GM12878 (cell line): ENCODE measurements at regions of chr3 and their contacts with region 1.

Region 1: DNA sequence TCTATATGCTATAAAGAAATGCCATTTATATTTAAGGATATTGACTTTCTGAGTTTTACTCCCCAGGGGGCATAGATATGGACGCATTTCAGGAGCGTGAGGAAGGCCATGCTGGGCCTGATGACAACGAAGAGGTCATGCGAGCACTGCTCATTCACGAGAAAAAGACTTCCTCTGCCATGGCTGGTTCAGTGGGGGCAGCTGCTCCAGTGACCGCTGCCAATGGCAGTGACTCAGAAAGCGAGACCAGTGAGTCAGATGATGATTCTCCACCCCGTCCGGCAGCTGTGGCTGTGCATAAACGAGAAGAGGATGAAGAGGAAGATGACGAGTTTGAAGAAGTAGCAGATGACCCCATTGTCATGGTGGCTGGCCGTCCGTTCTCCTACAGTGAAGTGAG is 38.4 kb downstream of the GTF2E1 start:
- DNase-seq: peak; percentile 62
- ATAC-seq: peak; percentile 98
- H3K4me3 ChIP-seq: no peak overlapping the region
- H3K27ac ChIP-seq: peak overlapping the region; percentile 7; the same call in 1 of the 2 replicates
- H3K4me1 ChIP-seq: peaks cover 11% of the 10 kb centered on the region
- H3K27me3 ChIP-seq: no peaks in the 10 kb centered on the region
- CTCF ChIP-seq: no peak
- EP300 ChIP-seq: peak; percentile 83 to 87
- POLR2A ChIP-seq: no peak
- RAD21 ChIP-seq: no peak

Region 2: DNA sequence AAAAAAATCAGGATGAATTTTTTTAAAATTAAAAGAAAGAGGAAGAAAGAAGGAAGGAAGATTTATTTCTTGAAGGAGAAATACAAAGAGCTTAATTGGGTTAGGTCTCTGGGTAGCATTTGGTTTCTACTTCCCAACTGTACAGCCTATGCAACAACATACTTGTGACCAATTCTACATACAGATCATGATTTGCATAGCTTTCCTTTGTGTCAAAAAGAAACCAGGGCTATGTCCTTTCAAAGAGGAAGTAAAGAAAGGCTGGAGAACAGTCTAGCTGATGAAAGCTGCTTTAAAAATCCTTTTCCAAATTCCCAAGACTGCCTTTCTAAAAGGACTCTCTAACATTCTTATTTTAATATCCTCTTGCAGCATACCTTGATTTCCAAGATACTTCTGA is 92.9 kb before region 1 on chr3:
- CTCF ChIA-PET with region 1: no interaction called
- POLR2A ChIA-PET with region 1: no interaction called
- RAD21 ChIA-PET with region 1: no interaction called
- SMC1A ChIA-PET with region 1: interaction called, 3 read pairs
- in situ Hi-C with region 1: no loop called
- intact Hi-C with region 1: loop called (anchors 5 kb)
- DNase-seq: peak; percentile 55
- ATAC-seq: peak; percentile 96
- H3K4me3 ChIP-seq: 0 out of 2 replicates have a peak overlapping the region, but pooled peaks have one; percentile 30
- H3K27ac ChIP-seq: peak overlapping the region; percentile 75
- H3K4me1 ChIP-seq: peaks cover 7% of the 10 kb centered on the region; the same call in 1 of the 2 replicates
- H3K27me3 ChIP-seq: no peaks in the 10 kb centered on the region
- CTCF ChIP-seq: no peak
- EP300 ChIP-seq: 0 out of 4 replicates have a peak, but pooled peaks of 1 of the 2 experiments have one; percentile 41
- POLR2A ChIP-seq: no peak
- RAD21 ChIP-seq: no peak

Region 3: GRCh38 chr3:120699333-120699732 is 81.6 kb before region 1 on chr3:
- CTCF ChIA-PET with region 1: no interaction called
- POLR2A ChIA-PET with region 1: no interaction called
- RAD21 ChIA-PET with region 1: no interaction called
- SMC1A ChIA-PET with region 1: no interaction called
- in situ Hi-C with region 1: no loop called
- intact Hi-C with region 1: loop called (anchors 5 kb)
- DNase-seq: no peak
- ATAC-seq: no peak
- H3K4me3 ChIP-seq: no peak overlapping the region
- H3K27ac ChIP-seq: no peak overlapping the region
- H3K4me1 ChIP-seq: no peaks in the 10 kb centered on the region
- H3K27me3 ChIP-seq: no peaks in the 10 kb centered on the region
- CTCF ChIP-seq: no peak
- EP300 ChIP-seq: no peak
- POLR2A ChIP-seq: no peak
- RAD21 ChIP-seq: no peak

Region 4: DNA sequence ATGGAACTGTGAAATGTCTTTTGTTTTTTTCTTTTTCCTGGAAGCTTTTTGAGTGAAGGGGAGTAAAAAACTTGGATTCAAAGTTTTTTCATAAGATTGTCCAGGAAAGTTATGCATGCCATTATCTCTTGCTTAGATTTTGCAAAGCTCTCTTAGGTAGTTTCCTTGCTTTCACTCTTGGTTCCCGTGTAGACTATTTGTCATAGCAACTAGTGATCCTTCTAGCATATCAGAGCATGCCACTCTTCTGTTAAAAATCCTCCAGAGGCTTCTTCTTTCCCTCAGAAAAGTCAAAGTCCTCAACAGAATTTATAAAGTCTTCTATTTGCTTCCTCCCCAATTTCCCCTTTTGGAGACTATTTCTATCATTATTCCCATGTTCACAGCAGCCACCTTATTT is 17.4 kb before region 1 on chr3:
- CTCF ChIA-PET with region 1: interaction called, 5 read pairs
- POLR2A ChIA-PET with region 1: interaction called, 5 read pairs
- RAD21 ChIA-PET with region 1: interaction called, 14 read pairs
- SMC1A ChIA-PET with region 1: interaction called, 15 read pairs
- in situ Hi-C with region 1: no loop called
- intact Hi-C with region 1: no loop called
- DNase-seq: no peak
- ATAC-seq: peak; percentile 92
- H3K4me3 ChIP-seq: peak overlapping the region; percentile 31; the same call in 1 of the 2 replicates
- H3K27ac ChIP-seq: peak overlapping the region; percentile 65
- H3K4me1 ChIP-seq: peaks cover 18% of the 10 kb centered on the region
- H3K27me3 ChIP-seq: no peaks in the 10 kb centered on the region
- CTCF ChIP-seq: no peak
- EP300 ChIP-seq: no peak
- POLR2A ChIP-seq: no peak
- RAD21 ChIP-seq: no peak

Region 5: GRCh38 chr3:120956143-120956542 is 175.2 kb after region 1 on chr3:
- CTCF ChIA-PET with region 1: no interaction called
- POLR2A ChIA-PET with region 1: no interaction called
- RAD21 ChIA-PET with region 1: no interaction called
- SMC1A ChIA-PET with region 1: no interaction called
- in situ Hi-C with region 1: no loop called
- intact Hi-C with region 1: no loop called
- DNase-seq: no peak
- ATAC-seq: peak; percentile 34; the same call in 1 of the 3 replicates
- H3K4me3 ChIP-seq: no peak overlapping the region
- H3K27ac ChIP-seq: no peak overlapping the region
- H3K4me1 ChIP-seq: no peaks in the 10 kb centered on the region
- H3K27me3 ChIP-seq: no peaks in the 10 kb centered on the region
- CTCF ChIP-seq: no peak
- EP300 ChIP-seq: no peak
- POLR2A ChIP-seq: no peak
- RAD21 ChIP-seq: no peak